Transverse colon (tissue), 4 donors: ENCODE measurements at regions of chr11 and their contacts with region 1.

Region 1: DNA sequence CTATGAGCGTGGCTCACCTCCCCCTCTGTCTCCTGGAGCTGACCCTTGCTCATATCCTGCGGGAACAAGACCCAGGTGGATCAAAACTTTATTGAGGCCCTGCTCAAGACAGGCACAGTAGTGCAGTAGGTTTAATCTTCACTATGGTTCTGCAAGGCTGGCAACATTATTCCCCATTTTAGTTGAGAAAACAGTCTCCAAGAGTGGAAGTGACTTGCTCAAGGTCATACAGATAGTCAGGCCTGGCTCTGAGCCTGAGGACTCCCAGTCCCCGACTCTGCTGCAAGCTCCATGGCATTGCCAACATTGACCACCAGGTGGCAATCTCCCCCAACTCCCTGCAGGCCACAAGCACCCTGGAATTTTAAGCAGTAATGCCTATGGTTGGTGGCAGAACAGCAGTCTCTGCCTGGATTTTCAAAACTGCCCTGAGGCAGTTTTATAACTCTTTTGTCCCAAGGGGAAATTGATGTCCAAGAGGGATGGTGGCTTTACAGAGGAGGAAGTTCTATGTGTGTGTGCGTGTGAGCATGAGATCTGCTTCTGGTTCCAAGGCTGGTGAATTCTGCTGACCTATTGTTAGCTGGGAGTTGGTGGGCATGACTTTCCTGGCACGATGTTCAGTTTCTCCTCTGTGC is 34.1 kb downstream of the NEU3 start:
- DNase-seq: peak; percentile 81
- H3K4me3 ChIP-seq: no peak overlapping the region
- H3K27ac ChIP-seq: no peak overlapping the region
- H3K4me1 ChIP-seq: no peaks in the 10 kb centered on the region
- H3K27me3 ChIP-seq: no peaks in the 10 kb centered on the region
- CTCF ChIP-seq: peak; percentile 89 to 95 (median 92)
- EP300 ChIP-seq: no peak
- POLR2A ChIP-seq: no peak

Region 2: DNA sequence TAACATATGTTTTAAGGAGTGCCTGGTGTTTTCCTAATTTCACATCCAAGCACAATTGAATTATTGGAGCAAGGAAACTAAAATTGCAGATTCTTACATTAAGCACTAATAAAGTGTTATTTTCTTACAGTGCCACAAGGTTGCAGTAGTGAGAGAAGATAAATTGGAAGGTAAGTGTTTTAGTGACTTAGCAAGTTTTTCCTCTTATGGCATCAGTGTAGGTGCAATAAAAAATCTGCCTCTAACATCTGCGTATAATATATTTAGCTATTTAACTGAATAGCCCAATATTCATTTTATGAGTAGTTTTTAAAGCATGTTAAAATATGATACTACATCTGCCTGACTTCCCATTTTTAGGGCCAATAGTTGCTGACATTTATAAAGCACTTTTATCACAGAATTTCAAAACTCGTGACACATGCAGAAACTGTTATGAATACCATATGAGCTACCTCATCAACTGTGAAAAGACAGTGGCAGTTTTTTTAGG is 411.5 kb before region 1 on chr11:
- in situ Hi-C with region 1: no loop called
- intact Hi-C with region 1: no loop called
- DNase-seq: no peak
- H3K4me3 ChIP-seq: no peak overlapping the region
- H3K27ac ChIP-seq: peak overlapping the region; percentile 60 to 76 (median 72)
- H3K4me1 ChIP-seq: peaks cover 0 to 20% (median 2%) of the 10 kb centered on the region in 4 donors
- H3K27me3 ChIP-seq: no peaks in the 10 kb centered on the region
- CTCF ChIP-seq: peak; percentile 34 to 65 (median 46)
- EP300 ChIP-seq: no peak
- POLR2A ChIP-seq: no peak

Region 3: DNA sequence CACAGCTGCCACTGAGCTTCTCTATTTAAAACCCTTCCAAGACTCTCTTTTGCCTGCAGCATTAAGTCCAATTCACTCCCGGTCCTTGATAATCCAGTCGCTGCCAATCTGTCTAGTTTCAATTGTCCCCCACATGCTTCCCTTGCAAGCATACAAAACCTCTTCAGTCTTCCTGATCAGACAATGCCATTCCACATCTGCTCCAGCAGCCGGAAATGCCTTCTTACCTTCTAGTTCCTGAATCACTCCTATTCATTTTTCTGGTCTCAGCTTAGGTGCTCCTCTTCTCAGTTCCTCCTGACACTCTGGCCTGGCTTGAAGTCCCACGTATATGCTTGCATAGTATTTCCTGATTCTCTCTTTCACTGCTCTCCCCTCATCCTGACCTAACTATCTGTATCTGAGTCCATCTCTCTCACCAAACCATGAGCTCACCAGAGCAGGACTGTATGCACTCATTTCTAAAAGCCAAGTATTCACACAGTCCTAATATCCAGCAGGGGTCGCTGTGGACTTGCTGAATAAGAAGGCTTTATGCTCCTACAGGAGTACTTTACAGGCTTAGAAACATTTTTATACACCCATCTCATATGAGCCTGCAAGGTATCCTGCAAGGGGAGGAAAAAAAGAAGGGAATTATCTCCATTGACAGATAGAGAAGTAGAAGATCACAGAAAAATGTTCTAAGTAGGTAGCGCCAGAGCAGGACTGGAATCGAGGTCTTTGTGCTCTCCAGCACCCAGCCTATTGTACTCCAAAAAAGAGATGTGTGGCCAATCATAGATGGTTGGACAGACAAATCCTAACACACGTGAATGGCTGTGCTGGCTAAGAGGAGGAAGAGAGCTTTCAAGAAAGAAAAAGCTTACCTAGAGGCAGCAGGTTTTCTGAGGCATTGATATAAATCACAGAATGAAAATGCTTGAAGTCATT is 93.2 kb before region 1 on chr11:
- in situ Hi-C with region 1: loop called in 2 of 4 experiments (anchors 10 kb)
- intact Hi-C with region 1: loop called (anchors 10 kb)
- DNase-seq: peak; percentile 67
- H3K4me3 ChIP-seq: no peak overlapping the region
- H3K27ac ChIP-seq: no peak overlapping the region
- H3K4me1 ChIP-seq: no peaks in the 10 kb centered on the region
- H3K27me3 ChIP-seq: no peaks in the 10 kb centered on the region
- CTCF ChIP-seq: peak; percentile 82 to 86 (median 85)
- EP300 ChIP-seq: no peak
- POLR2A ChIP-seq: no peak

Region 4: DNA sequence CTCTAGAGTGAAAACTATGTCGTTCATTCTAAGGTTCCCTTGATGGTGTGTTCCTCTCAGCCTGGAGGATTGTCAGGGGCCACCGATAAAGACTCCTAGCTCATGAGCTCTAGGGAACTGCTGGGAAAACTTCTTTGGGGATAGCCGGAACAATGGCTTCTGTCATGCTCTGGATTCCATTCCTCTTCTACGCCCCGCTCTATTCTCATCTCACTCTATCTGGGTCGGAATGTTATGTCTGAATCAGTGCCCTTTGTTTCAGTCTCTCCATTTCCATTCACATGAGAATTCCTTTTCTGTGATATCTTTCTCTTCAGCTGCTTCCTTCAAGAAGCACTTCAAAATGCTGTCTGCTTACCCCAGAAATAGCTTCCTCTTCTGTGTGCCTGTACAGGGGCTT is 111.1 kb after region 1 on chr11:
- in situ Hi-C with region 1: loop called in 1 of 4 experiments (anchors 10 kb)
- intact Hi-C with region 1: no loop called
- DNase-seq: no peak
- H3K4me3 ChIP-seq: no peak overlapping the region
- H3K27ac ChIP-seq: no peak overlapping the region
- H3K4me1 ChIP-seq: no peaks in the 10 kb centered on the region
- H3K27me3 ChIP-seq: no peaks in the 10 kb centered on the region
- CTCF ChIP-seq: no peak
- EP300 ChIP-seq: no peak
- POLR2A ChIP-seq: no peak

Region 5: GRCh38 chr11:75241036-75241905 is 218.4 kb after region 1 on chr11:
- in situ Hi-C with region 1: loop called (anchors 10 to 25 kb)
- intact Hi-C with region 1: loop called (anchors 5 kb)
- DNase-seq: peak; percentile 87
- H3K4me3 ChIP-seq: peak overlapping the region in 3 of 4 donors; percentile 19 to 49 (median 40)
- H3K27ac ChIP-seq: peak overlapping the region in 1 of 4 donors; percentile 6
- H3K4me1 ChIP-seq: peaks cover 0 to 16% (median 11%) of the 10 kb centered on the region in 4 donors
- H3K27me3 ChIP-seq: peaks cover 57% of the 10 kb centered on the region
- CTCF ChIP-seq: peak in 4 of 5 experiments; percentile 22 to 90 (median 69)
- EP300 ChIP-seq: no peak
- POLR2A ChIP-seq: no peak

Region 6: DNA sequence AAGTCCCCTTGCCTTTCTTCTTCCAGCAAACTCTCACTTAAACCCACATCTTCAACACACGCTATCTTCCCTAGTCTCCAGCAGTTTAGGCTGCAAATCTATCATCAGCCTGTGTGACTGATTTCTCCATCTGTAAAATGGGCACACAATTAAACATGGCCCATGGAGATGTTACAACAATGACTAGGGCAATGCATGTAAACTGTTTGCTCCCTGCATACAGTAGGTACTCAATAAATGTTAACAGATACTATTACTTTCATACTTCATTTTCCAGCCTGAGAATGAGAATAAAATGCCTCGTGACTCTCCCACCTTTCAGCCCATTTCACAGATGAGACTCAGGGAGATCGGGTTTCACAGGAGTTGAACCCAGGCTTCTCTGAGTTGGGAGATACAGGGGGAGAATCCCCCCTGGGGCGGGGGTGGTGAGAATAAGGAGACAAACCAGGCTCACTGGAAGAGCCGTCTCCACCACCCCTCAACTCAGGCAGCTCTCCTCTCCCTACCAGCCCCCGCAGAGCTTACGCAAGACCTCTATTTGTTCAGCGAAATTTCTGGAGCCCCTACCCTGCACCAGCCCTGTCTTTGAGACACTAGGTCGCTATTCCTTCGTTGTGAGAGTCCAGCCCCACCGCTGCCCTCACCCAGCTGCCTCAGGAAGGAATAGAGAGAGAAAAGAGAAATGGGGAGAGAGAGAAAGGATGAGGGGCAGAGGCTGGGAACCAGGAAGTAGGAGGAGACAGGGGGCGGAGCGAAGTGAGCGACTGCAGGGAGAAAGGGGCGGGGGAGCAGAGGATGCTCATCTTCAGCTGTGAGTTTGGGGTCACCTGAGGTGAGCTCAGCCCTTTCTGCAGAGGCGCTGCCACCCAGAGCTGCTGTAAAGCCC is 452.2 kb after region 1 on chr11:
- in situ Hi-C with region 1: no loop called
- intact Hi-C with region 1: no loop called
- DNase-seq: peak; percentile 46
- H3K4me3 ChIP-seq: no peak overlapping the region
- H3K27ac ChIP-seq: peak overlapping the region in 3 of 4 donors; percentile 30 to 41 (median 41)
- H3K4me1 ChIP-seq: peaks cover 0 to 12% (median 4%) of the 10 kb centered on the region in 4 donors
- H3K27me3 ChIP-seq: no peaks in the 10 kb centered on the region
- CTCF ChIP-seq: no peak
- EP300 ChIP-seq: no peak
- POLR2A ChIP-seq: no peak